Caco-2 (cell line): ENCODE measurements at regions of chr1 and their contacts with region 1.

Region 1: GRCh38 chr1:108199781-108200570 is at the start of gene SLC25A24:
- DNase-seq: peak; percentile 80 to 85
- H3K4me3 ChIP-seq: peak within 1 kb of the TSS; percentile 94
- H3K4me3 Mint-ChIP-seq: peak within 1 kb of the TSS; percentile 84
- H3K27ac Mint-ChIP-seq: peak within 1 kb of the TSS; percentile 91
- H3K4me1 ChIP-seq: no peaks in the 10 kb centered on the region
- H3K4me1 Mint-ChIP-seq: no peaks in the 10 kb centered on the region
- H3K27me3 ChIP-seq: no peaks in the 10 kb centered on the region
- H3K27me3 Mint-ChIP-seq: no peaks in the 10 kb centered on the region
- CTCF ChIP-seq: no peak
- total RNA-seq, gene SLC25A24: 26.4 and 27.6 TPM in 2 replicates

Region 2: DNA sequence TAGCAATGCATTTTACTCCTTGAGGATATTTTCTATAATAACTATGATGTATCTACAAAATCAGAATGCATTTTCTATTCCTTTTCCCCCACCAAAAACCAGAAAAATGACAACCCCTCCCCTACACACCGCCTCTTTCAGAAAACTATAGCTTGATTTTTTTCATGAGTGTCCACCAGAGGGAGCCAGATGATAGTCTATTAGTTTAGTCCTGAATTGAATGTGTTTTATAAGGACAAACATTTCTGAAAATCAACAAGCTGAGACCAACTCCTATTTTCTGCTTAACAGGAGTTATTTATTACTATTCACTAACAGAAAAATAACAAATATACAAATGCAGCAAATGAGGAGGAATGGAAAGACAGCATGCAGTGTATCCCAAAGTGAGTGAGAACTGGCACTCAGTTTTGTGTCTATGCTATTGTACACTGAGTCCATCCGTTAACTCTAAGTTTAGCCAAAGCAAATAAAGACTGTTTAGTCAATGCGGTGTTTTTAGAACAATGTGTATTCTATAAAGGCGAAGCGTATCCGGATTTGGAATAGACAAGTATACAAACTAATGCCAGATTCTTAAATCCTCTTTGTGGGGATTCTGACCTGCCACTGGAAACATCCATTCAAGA is 417.6 kb before region 1 on chr1:
- CTCF ChIA-PET with region 1: interaction called, 3 read pairs
- POLR2A ChIA-PET with region 1: no interaction called
- intact Hi-C with region 1: loop called (anchors 5 kb)
- DNase-seq: peak in 1 of 2 experiments; percentile 45
- H3K4me3 ChIP-seq: no peak overlapping the region
- H3K4me3 Mint-ChIP-seq: no peak overlapping the region
- H3K27ac Mint-ChIP-seq: no peak overlapping the region
- H3K4me1 ChIP-seq: no peaks in the 10 kb centered on the region
- H3K4me1 Mint-ChIP-seq: no peaks in the 10 kb centered on the region
- H3K27me3 ChIP-seq: no peaks in the 10 kb centered on the region
- H3K27me3 Mint-ChIP-seq: no peaks in the 10 kb centered on the region
- CTCF ChIP-seq: peak; percentile 36 to 57

Region 3: DNA sequence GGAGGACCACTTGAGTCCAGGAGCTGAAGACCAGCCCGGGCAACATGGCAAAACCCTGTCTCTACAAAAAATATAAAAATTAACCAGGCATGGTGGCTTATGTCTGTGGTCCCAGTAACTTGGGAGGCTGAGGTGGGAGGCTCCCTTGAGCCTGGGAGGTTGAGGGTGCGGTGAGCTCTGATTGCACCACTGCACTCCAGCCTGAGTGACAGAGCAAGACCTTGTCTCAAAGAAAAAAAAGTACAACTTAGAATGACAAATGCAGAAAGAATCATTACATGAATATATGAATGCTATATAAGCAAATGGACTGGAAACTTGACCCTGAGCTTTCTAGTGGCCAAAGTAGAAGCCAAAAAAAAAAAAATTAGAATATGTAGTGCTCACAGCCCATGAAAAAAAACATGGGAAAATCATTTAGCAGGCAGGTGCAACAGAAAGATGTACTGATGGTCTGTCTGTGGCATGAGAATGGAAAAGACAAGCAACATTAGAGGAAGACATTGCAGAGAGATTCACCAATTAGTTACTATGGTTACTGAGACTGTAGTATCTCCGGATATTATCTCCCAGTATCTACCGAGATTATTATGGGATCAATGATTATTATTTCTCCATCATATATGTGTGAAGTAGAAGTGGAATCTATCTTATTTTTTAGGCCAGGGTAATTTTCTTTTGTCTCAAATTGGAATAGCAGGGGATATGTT is 933.2 kb after region 1 on chr1:
- CTCF ChIA-PET with region 1: no interaction called
- POLR2A ChIA-PET with region 1: no interaction called
- intact Hi-C with region 1: no loop called
- DNase-seq: no peak
- H3K4me3 ChIP-seq: no peak overlapping the region
- H3K4me3 Mint-ChIP-seq: no peak overlapping the region
- H3K27ac Mint-ChIP-seq: no peak overlapping the region
- H3K4me1 ChIP-seq: peaks cover 35% of the 10 kb centered on the region
- H3K4me1 Mint-ChIP-seq: peaks cover 18% of the 10 kb centered on the region
- H3K27me3 ChIP-seq: no peaks in the 10 kb centered on the region
- H3K27me3 Mint-ChIP-seq: no peaks in the 10 kb centered on the region
- CTCF ChIP-seq: no peak